HEK293T (cell line): ENCODE measurements at regions of chr16 and their contacts with region 1.

Region 1: GRCh38 chr16:84277237-84277823 is 17.3 kb upstream of the WFDC1 start:
- DNase-seq: peak; percentile 65

Region 2: GRCh38 chr16:84266451-84266850 is 10.9 kb before region 1 on chr16:
- CTCF ChIA-PET with region 1: interaction called, 20 read pairs
- POLR2A ChIA-PET with region 1: no interaction called
- DNase-seq: peak; percentile 83

Region 3: DNA sequence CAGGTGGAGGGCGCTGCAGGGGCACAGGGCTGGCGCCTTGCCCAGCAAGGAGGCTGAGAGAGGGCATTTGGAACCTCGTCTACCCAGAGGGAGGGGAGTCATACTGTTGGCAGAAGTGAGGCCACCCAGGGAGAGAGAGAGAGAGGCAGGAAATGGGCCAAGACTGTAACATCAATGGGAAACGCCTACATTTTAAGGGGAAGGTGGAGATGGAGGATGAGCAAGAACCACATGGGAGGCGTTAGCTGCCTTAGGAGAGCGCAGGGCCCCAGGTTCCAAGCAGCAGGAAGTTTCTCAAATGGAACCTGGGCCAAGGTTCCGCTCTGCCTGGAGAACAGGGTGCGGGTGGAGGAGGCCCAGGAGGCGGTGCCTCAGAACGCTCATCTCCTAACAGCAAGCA is 14.7 kb after region 1 on chr16:
- CTCF ChIA-PET with region 1: no interaction called
- POLR2A ChIA-PET with region 1: no interaction called
- DNase-seq: no peak

Region 4: GRCh38 chr16:84484579-84485254 is 207.4 kb after region 1 on chr16:
- CTCF ChIA-PET with region 1: interaction called, 11 read pairs
- POLR2A ChIA-PET with region 1: no interaction called
- DNase-seq: peak; percentile 66